Heart right ventricle (tissue), 16 donors: ENCODE measurements at regions of chr10 and their contacts with region 1.

Region 1: DNA sequence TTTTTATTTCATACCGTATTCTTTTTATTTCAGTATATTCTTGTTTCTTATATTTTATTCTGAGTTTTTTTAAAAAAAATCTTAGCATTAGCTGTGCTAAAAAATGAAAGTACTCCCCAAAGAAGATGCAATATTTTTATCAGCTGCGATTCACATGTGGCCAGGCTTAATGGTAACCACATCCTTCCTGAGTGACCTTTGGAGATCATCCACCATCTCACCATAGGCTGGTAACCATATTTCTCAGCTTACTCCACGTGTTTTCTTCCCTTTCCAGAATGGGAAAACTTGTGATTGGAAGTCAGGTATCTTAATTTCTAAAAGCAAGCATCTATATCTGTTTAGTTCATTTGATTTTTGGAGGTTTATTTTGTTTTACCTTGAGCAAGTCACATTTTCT is 18.8 kb upstream of the LIPM start:
- DNase-seq: no peak
- ATAC-seq: no peak
- H3K4me3 ChIP-seq: no peak overlapping the region
- H3K27ac ChIP-seq: no peak overlapping the region
- H3K4me1 ChIP-seq: no peaks in the 10 kb centered on the region
- H3K27me3 ChIP-seq: peaks cover 0 to 4% (median 0%) of the 10 kb centered on the region in 7 donors
- CTCF ChIP-seq: no peak

Region 2: GRCh38 chr10:88687853-88688467 is 95.8 kb before region 1 on chr10:
- intact Hi-C with region 1: loop called in 1 of 10 experiments (anchors 10 kb)
- DNase-seq: no peak
- ATAC-seq: no peak
- H3K4me3 ChIP-seq: no peak overlapping the region
- H3K27ac ChIP-seq: no peak overlapping the region
- H3K4me1 ChIP-seq: no peaks in the 10 kb centered on the region
- H3K27me3 ChIP-seq: peaks cover 0 to 14% (median 0%) of the 10 kb centered on the region in 7 donors
- CTCF ChIP-seq: peak; percentile 34 to 81 (median 65)